ENCODE measurements at regions of chr4 and their contacts with region 1.

Region 1: DNA sequence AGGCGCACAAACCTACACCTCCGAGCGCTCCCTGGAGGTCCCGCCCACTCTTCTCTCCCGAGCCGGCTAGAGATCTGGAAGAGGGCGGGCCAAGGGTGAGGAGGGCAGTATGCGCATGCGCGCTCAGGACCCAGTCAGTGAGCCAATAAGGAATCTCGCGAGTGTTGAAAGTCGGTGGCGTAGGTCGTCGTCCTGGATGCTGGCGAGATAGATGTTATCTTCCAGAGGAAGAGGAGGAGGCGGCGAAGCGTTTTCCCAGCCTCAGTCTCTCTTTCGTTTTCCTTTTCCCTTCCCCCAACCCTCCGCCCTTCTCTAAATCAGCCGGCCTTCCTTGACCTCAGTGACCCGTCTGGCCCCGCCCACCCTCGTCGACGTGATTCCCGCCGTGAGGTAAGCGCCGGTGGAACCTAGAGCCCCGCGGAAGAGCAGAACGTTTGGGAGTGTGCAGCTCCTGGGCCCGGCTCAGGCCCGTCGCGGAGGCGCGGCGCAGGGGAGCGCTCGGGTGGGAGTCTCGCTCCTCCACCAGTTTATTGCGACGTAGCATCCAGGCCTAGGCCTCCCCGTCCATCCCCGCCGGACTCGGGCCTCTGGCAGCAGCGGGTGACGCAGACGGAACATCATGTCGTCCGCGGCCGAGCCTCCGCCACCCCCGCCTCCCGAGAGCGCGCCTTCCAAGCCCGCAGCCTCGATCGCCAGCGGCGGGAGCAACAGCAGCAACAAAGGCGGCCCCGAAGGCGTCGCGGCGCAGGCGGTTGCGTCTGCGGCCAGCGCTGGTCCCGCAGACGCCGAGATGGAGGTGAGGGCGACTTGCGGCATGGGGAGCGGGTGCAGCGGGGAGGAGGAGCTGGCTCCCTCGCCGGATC is at the start of gene SMARCA5:
- DNase-seq: peak; percentile 95 to 97
- ATAC-seq: peak; percentile 92 to 95
- H3K4me3 ChIP-seq: peak within 1 kb of the TSS; percentile 77 to 92 (median 86)
- H3K27ac ChIP-seq: peak within 1 kb of the TSS; percentile 91 to 96 (median 94)
- H3K4me1 ChIP-seq: peaks cover 38 to 44% of the 10 kb centered on the region in 2 donors
- H3K27me3 ChIP-seq: no peaks in the 10 kb centered on the region
- CTCF ChIP-seq: no peak
- POLR2A ChIP-seq: peak; percentile 89 to 95
- total RNA-seq, gene SMARCA5: 19.7 to 27.8 (median 26.7) TPM

Region 2: GRCh38 chr4:143184217-143185116 is 329.1 kb before region 1 on chr4 and contains the start of gene USP38:
- in situ Hi-C with region 1: no loop called
- intact Hi-C with region 1: loop called (anchors 1 kb)
- DNase-seq: peak; percentile 94 to 96
- ATAC-seq: peak; percentile 81 to 93
- H3K4me3 ChIP-seq: peak within 1 kb of the TSS; percentile 73 to 94 (median 91)
- H3K27ac ChIP-seq: peak within 1 kb of the TSS; percentile 95 to 98 (median 96)
- H3K4me1 ChIP-seq: peaks cover 29 to 37% of the 10 kb centered on the region in 2 donors
- H3K27me3 ChIP-seq: no peaks in the 10 kb centered on the region
- CTCF ChIP-seq: peak in 2 of 5 experiments; percentile 9 to 28
- POLR2A ChIP-seq: peak; percentile 82 to 91
- total RNA-seq, gene USP38: 63.6 to 142 (median 102) TPM

Region 3: GRCh38 chr4:143329985-143330384 is 183.6 kb before region 1 on chr4:
- in situ Hi-C with region 1: no loop called
- intact Hi-C with region 1: no loop called
- DNase-seq: no peak
- ATAC-seq: no peak
- H3K4me3 ChIP-seq: no peak overlapping the region
- H3K27ac ChIP-seq: no peak overlapping the region
- H3K4me1 ChIP-seq: no peaks in the 10 kb centered on the region
- H3K27me3 ChIP-seq: no peaks in the 10 kb centered on the region
- CTCF ChIP-seq: no peak
- POLR2A ChIP-seq: no peak

Region 4: GRCh38 chr4:143375313-143376073 is 138.0 kb before region 1 on chr4:
- in situ Hi-C with region 1: loop called in 1 of 4 experiments (anchors 10 kb)
- intact Hi-C with region 1: no loop called
- DNase-seq: peak in 1 of 2 donors; percentile 35
- ATAC-seq: peak; percentile 46 to 58
- H3K4me3 ChIP-seq: no peak overlapping the region
- H3K27ac ChIP-seq: peak overlapping the region; percentile 69 to 92 (median 86)
- H3K4me1 ChIP-seq: peaks cover 81 to 82% of the 10 kb centered on the region in 2 donors
- H3K27me3 ChIP-seq: no peaks in the 10 kb centered on the region
- CTCF ChIP-seq: peak; percentile 38 to 61 (median 40)
- POLR2A ChIP-seq: no peak

Region 5: DNA sequence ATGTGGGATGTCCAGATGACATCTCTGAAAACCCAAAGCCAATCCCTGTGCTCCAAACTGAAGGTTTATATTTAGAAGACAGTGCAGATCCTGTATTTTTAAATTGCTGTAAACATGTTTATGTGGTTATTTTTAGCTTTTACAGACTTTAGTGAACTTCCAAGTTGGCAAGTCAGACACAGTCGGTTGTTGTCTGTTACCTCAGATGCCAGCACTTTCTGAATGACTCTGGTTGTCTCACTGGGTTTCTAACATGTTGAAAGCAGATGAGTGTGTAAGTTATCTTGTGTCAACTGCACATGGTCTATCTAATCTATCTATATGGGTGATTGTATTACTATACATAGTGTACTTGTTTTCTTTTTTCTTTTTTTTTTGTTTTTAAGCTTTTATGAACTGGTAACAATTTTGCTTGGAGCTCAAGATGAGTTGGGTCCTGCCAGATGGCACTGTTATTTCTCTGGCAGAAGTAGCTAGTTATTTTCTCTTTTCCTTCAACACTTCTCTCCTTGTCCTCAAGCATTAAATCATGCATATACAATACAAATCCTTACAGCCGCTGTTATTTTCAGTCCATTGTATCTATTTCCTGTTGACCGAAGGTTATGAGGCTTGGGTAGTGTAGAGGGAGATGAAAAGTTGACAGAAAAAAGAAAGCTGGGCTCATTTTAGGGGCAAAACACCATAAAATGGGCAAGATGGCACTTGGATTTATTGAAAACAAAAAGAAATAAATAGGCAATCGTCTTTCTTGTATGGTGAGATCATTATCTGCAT is 110.6 kb before region 1 on chr4:
- in situ Hi-C with region 1: no loop called
- intact Hi-C with region 1: loop called (anchors 5 kb)
- DNase-seq: peak; percentile 64 to 74
- ATAC-seq: peak; percentile 94 to 95
- H3K4me3 ChIP-seq: peak overlapping the region; percentile 26 to 42 (median 30)
- H3K27ac ChIP-seq: peak overlapping the region; percentile 80 to 95 (median 86)
- H3K4me1 ChIP-seq: peaks cover 89 to 90% of the 10 kb centered on the region in 2 donors
- H3K27me3 ChIP-seq: no peaks in the 10 kb centered on the region
- CTCF ChIP-seq: no peak
- POLR2A ChIP-seq: peak in 1 of 2 donors; percentile 42

Region 6: DNA sequence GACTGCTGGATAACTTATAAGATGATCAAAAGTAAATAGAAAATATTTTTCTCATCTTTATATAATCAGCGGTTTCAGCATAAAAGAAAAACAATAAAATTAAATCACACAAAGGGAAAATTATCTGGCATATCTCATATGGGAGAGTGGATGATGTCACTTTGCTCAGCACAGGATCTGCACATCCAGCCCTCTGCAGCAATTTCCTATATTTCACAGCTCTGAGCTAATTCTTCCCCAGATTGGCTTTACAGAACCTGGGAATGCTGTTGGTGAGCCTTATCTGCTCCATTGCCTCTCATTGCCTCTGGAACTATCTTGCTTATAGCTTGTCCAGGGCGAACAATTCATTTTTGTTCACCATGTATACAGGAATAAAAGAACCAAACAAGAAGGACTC is 165.9 kb after region 1 on chr4:
- in situ Hi-C with region 1: no loop called
- intact Hi-C with region 1: no loop called
- DNase-seq: no peak
- ATAC-seq: no peak
- H3K4me3 ChIP-seq: no peak overlapping the region
- H3K27ac ChIP-seq: no peak overlapping the region
- H3K4me1 ChIP-seq: no peaks in the 10 kb centered on the region
- H3K27me3 ChIP-seq: no peaks in the 10 kb centered on the region
- CTCF ChIP-seq: no peak
- POLR2A ChIP-seq: no peak